Activated T-helper 1 cell treated with anti-CD3 and anti-CD28 coated beads, Interleukin-12 subunit alpha, Interleukin-12 subunit beta, Interleukin-2, Interleukin-4 antibody, amounts not matched to agents 30 ng/mL and 10 ng/mL and 1 ng/mL, durations not matched to agents 14 hours and 24 hours and 36 hours (primary cell): ENCODE measurements at regions of chr2 and their contacts with region 1.

Region 1: DNA sequence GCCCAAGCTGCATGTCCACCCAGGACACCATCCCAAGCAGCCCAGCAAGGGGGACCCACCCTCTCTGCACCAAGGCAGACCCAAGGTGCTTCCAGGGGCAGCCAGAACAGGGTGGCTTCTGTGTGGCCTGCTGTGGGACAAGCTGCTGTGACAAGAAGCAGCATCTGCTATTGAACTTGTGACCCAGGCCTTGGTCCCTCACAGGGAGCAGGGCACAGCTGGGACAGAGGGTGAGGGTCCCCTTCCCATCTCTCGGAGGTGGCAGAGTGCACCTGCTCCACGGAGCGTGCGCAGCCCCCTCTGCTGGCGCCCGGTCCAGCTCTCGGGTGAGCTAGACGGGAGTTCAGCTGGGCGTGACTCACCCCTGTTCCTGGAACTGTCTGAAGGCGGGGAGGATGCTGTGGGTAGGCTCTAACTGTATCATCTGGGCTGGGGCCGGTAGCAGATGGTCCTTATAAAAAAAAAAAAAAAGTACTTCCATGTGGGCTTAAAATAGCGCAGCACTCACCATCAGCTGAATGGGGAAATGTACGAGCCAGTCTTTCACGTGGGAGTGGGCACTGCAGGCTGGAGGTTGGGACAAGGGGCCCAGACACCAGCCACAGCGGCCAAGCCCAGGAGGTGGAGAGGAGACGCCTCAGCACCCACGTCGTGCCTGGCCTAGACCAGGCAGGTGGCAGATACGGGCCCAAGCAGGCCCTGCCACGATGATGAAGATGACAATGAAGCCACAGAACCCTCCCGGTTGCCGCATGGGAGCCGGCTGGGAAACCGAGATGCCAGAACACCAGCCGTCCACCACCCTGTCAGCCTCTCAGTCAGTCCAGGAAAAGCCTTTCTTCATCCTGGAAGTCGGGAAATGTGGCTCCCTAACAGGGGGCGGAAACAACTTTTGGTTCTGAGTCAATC is 136.8 kb upstream of the ID2 start:
- DNase-seq: peak; percentile 83
- H3K4me3 Mint-ChIP-seq: peak overlapping the region; percentile 59
- H3K27ac Mint-ChIP-seq: peak overlapping the region; percentile 99
- H3K4me1 Mint-ChIP-seq: peaks cover 80% of the 10 kb centered on the region
- H3K27me3 Mint-ChIP-seq: no peaks in the 10 kb centered on the region

Region 2: DNA sequence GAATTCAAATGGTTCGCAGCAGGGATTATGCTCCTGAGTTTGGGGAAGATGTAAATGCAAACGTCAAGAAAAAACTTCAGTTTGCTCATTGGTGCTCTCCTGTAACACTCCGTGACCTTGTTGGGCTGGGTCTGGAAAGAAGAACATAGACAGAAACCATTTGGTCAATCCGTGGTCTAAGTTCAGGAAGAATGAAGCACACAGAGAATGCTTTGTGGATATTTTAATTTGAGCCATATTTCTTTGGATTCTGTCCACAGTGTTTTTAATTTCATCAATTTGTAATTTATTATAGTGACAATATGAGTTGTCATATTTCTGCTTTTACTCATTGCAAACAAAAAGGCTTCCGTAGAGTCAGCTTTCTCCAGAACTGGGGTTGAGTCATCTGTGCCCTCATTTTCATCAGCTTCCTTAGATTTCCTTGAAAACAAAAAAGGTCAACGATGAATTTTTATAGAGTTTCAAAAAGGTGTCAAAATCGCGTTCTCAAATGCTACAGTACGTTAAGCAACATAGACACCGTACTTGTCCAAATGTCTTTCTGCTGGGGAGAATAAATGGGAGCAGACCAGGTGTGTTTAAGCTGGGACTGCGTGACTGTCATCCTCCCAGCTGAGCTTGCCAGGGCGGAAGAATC is 1021.4 kb before region 1 on chr2:
- intact Hi-C with region 1: loop called (anchors 2 kb)
- DNase-seq: no peak
- H3K4me3 Mint-ChIP-seq: peak overlapping the region; percentile 2
- H3K27ac Mint-ChIP-seq: peak overlapping the region; percentile 90
- H3K4me1 Mint-ChIP-seq: peaks cover 77% of the 10 kb centered on the region
- H3K27me3 Mint-ChIP-seq: no peaks in the 10 kb centered on the region

Region 3: GRCh38 chr2:7773362-7774360 is 771.4 kb before region 1 on chr2:
- intact Hi-C with region 1: loop called (anchors 1 kb)
- DNase-seq: peak; percentile 39
- H3K4me3 Mint-ChIP-seq: peak overlapping the region; percentile 28
- H3K27ac Mint-ChIP-seq: peak overlapping the region; percentile 91
- H3K4me1 Mint-ChIP-seq: peaks cover 41% of the 10 kb centered on the region
- H3K27me3 Mint-ChIP-seq: no peaks in the 10 kb centered on the region

Region 4: DNA sequence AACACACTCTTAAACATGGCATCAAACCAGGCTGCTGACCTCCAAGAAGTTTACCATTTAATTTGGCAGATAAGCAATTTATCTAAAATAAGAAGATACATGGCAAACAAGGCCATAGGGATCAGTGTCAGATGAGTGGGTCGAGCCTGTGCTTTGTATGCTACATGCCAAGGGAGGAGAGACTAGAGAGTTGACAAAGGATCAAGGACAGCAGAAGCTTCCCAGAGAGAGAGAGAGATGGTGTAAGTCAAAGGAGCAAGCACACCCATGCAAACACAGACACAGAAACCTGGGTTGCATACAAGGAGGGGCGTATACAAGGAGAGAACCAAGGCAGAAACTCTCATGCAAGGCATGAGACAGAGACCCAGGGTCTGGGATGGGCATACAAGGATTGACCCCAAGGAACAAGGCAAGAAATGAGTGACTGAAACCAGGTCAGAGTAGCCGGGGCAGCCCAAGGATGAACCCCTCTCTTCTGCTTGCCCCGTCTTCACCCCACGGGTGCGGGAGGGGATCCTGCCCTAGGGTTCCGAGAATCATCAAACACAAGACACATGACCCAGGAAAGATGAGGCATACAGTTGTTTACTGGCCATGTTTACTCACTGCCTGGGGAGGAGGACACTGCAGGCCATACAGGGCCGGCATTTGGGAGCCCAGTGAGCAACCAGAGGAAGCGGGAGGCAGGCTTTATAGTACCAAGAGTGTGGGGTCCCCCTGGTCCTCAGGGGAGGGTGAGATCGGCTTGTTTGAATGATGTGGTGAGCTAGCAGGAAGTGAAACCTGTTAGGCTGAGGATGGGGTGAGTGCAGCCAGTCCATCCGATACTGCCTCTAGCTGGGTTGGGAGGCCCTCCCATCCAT is 392.4 kb before region 1 on chr2:
- intact Hi-C with region 1: loop called (anchors 1 kb)
- DNase-seq: no peak
- H3K4me3 Mint-ChIP-seq: no peak overlapping the region
- H3K27ac Mint-ChIP-seq: peak overlapping the region; percentile 62
- H3K4me1 Mint-ChIP-seq: peaks cover 38% of the 10 kb centered on the region
- H3K27me3 Mint-ChIP-seq: no peaks in the 10 kb centered on the region

Region 5: DNA sequence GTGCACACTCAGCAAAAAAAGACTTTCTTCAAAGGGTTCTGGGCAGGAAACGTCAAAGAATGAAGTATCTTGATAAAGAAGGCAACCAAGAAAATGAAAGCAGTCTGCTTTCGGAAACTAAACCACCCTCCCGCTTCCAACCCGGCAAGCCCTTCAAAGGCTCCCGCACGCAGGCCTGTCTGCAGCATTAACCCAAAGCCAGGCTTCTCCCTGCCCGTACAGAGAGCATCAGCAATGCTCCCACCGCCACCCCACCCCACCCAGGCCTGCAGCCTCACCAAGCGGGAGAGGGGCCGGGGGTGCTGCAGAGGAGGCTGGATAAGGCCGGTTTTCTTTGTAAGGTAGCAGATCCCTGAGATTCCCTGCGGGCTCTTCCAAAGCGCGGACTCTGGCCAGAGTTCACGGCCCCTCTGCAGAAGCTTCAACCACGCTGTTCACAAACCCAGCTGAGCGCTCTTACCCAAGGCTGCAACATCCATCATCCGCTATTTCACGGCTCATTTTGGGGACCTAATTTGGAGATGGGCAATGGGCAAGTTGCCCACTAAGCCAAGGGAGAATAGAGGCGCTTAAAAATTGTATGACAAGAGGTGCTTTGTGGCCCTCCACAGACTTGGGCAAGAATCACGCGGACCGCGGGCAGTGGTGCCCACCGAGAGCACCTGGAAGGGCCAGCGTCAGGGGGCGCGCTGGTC is 88.7 kb before region 1 on chr2:
- intact Hi-C with region 1: loop called (anchors 1 kb)
- DNase-seq: peak; percentile 58
- H3K4me3 Mint-ChIP-seq: peak overlapping the region; percentile 66
- H3K27ac Mint-ChIP-seq: peak overlapping the region; percentile 88
- H3K4me1 Mint-ChIP-seq: peaks cover 56% of the 10 kb centered on the region
- H3K27me3 Mint-ChIP-seq: peaks cover 22% of the 10 kb centered on the region

Region 6: GRCh38 chr2:8586457-8587051 is 41.5 kb after region 1 on chr2:
- intact Hi-C with region 1: loop called (anchors 1 kb)
- DNase-seq: no peak
- H3K4me3 Mint-ChIP-seq: peak overlapping the region; percentile 5
- H3K27ac Mint-ChIP-seq: no peak overlapping the region
- H3K4me1 Mint-ChIP-seq: peaks cover 48% of the 10 kb centered on the region
- H3K27me3 Mint-ChIP-seq: peaks cover 5% of the 10 kb centered on the region